Mammary epithelial cell (primary cell): ENCODE measurements at regions of chr19 and their contacts with region 1.

Region 1: GRCh38 chr19:4342615-4343369 is 570 bp upstream of the MPND start:
- DNase-seq: peak; percentile 100
- H3K4me3 ChIP-seq: peak overlapping the region; percentile 53 to 70 (median 62)
- H3K27ac ChIP-seq: peak overlapping the region; percentile 48
- H3K4me1 ChIP-seq: peaks cover 19% of the 10 kb centered on the region
- H3K27me3 ChIP-seq: no peaks in the 10 kb centered on the region
- CTCF ChIP-seq: peak in 1 of 2 donors; percentile 38

Region 2: DNA sequence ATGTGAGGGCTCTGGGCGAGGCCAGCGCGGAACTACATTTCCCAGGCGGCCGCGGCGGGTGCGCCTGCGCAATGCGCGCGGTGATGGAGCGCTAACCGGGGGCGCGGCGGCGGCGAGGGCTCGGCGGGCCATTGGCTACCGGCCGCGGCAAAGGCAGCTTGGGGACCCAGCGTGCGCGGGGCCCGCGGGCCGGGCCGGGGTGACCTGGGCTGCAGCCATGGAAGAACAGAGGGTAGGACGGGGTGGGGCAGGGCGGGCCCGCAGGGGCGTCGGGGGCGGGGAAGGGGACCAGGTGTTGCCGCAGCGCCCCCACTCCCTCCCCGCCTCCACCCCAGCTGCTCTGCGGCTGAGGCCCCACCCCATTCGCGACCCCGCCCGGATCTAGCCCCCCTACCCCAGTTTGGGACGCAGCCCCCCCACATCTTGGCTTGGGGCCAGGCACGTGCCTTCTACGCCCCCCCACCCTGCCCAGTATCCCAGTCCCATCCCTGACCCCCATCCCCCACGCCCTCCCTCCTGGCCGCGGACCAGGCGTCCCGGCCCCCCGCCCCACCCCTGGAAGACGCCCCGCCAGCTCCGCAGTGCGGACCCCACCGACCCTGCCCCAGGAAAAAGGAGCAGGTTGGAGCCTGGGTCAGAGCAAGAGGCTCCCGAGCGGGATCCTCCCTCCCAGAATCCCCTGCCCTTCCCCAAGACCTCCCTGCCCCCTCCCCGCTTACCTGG is 38.1 kb before region 1 on chr19 and contains the start of gene FSD1:
- CTCF ChIA-PET with region 1: no interaction called
- dilution Hi-C with region 1: no loop called
- in situ Hi-C with region 1: no loop called
- intact Hi-C with region 1: loop called (anchors 5 kb)
- DNase-seq: no peak
- H3K4me3 ChIP-seq: peak within 1 kb of the TSS in 1 of 3 experiments; percentile 28
- H3K27ac ChIP-seq: no peak within 1 kb of the TSS
- H3K4me1 ChIP-seq: no peaks in the 10 kb centered on the region
- H3K27me3 ChIP-seq: no peaks in the 10 kb centered on the region
- CTCF ChIP-seq: no peak
- total RNA-seq, gene FSD1: 0.50 to 7.8 TPM

Region 3: GRCh38 chr19:4390567-4391305 is 47.9 kb after region 1 on chr19:
- CTCF ChIA-PET with region 1: no interaction called
- dilution Hi-C with region 1: no loop called
- in situ Hi-C with region 1: no loop called
- intact Hi-C with region 1: loop called (anchors 1 kb)
- DNase-seq: peak; percentile 73
- H3K4me3 ChIP-seq: no peak overlapping the region
- H3K27ac ChIP-seq: peak overlapping the region; percentile 66
- H3K4me1 ChIP-seq: peaks cover 43% of the 10 kb centered on the region
- H3K27me3 ChIP-seq: no peaks in the 10 kb centered on the region
- CTCF ChIP-seq: no peak